Naive thymus-derived CD4-positive, alpha-beta T cell (primary cell): ENCODE measurements at regions of chr5 and their contacts with region 1.

Region 1: DNA sequence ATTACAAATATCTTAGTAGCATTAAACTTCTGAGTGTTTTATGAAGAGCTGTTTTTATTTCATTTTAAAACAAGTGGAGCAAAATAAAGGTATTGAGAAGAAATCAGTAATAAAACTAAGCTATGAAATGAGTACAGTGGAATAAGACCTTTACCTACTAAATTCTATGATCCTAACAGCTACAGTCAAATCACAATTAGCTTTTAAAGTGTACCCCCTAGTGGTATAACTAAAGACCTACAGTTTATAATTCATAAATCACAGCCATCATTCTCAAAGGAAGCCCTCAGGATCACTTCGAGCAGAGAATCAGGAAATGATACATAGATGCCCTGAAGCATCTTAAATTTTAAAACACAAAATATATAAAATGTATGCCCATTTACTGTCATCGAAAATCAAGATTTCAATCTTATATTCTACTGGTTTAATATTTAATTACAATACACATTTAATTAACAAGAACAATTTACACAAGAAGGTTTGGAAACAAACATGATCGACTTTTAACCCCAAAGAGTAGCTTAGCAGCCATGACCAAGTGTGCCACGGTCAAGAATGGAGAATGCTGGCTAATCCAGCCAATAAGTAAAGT is 12.3 kb downstream of the CCNH start:
- DNase-seq: peak in 6 of 9 donors; percentile 30 to 66 (median 52)
- ATAC-seq: peak; percentile 87
- H3K4me3 ChIP-seq: no peak overlapping the region
- H3K4me3 Mint-ChIP-seq: peak overlapping the region in 1 of 10 donors; percentile 34
- H3K27ac ChIP-seq: peak overlapping the region; percentile 43
- H3K27ac Mint-ChIP-seq: peak overlapping the region in 7 of 9 donors; percentile 17 to 75 (median 69)
- H3K4me1 ChIP-seq: peaks cover 11 to 15% of the 10 kb centered on the region in 2 donors
- H3K4me1 Mint-ChIP-seq: peaks cover 13 to 48% (median 28%) of the 10 kb centered on the region in 7 donors
- H3K27me3 ChIP-seq: no peaks in the 10 kb centered on the region
- H3K27me3 Mint-ChIP-seq: no peaks in the 10 kb centered on the region

Region 2: DNA sequence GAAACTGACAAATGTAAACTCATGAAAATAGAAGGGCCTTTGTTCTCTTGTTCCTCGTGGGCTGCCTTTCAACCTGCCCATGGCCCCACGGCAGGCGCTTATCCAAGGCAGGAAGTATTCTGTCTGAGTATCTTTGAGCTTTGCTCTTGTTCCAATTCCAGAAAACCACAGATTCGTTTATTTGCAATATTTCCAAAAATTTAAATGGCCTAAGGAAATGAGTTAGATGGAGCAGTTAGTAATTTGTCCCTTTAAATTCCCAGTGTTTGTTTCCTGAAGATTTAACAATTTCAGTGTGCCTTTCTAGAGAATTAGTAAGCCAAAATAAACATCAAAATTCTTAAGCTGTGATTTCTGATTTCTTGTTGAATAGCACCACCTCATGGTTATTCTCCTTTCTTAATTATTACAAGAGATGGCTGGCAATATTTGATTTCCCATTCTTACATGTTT is 432.1 kb before region 1 on chr5:
- CTCF ChIA-PET with region 1: interaction called, 7 read pairs
- POLR2A ChIA-PET with region 1: no interaction called
- intact Hi-C with region 1: loop called (anchors 1 kb)
- DNase-seq: peak in 5 of 9 donors; percentile 10 to 29 (median 19)
- ATAC-seq: no peak
- H3K4me3 ChIP-seq: no peak overlapping the region
- H3K4me3 Mint-ChIP-seq: no peak overlapping the region
- H3K27ac ChIP-seq: no peak overlapping the region
- H3K27ac Mint-ChIP-seq: peak overlapping the region in 1 of 9 donors; percentile 7
- H3K4me1 ChIP-seq: no peaks in the 10 kb centered on the region
- H3K4me1 Mint-ChIP-seq: peaks cover 0 to 10% (median 6%) of the 10 kb centered on the region in 7 donors
- H3K27me3 ChIP-seq: no peaks in the 10 kb centered on the region
- H3K27me3 Mint-ChIP-seq: peaks cover 0 to 44% (median 11%) of the 10 kb centered on the region in 5 donors

Region 3: GRCh38 chr5:87008751-87009560 is 391.4 kb before region 1 on chr5:
- CTCF ChIA-PET with region 1: no interaction called
- POLR2A ChIA-PET with region 1: no interaction called
- intact Hi-C with region 1: loop called in 1 of 2 experiments (anchors 1 kb)
- DNase-seq: no peak
- ATAC-seq: no peak
- H3K4me3 ChIP-seq: no peak overlapping the region
- H3K4me3 Mint-ChIP-seq: no peak overlapping the region
- H3K27ac ChIP-seq: no peak overlapping the region
- H3K27ac Mint-ChIP-seq: no peak overlapping the region
- H3K4me1 ChIP-seq: no peaks in the 10 kb centered on the region
- H3K4me1 Mint-ChIP-seq: no peaks in the 10 kb centered on the region
- H3K27me3 ChIP-seq: no peaks in the 10 kb centered on the region
- H3K27me3 Mint-ChIP-seq: peaks cover 0 to 20% (median 0%) of the 10 kb centered on the region in 5 donors

Region 4: GRCh38 chr5:87069974-87070624 is 330.3 kb before region 1 on chr5:
- CTCF ChIA-PET with region 1: interaction called, 4 read pairs
- POLR2A ChIA-PET with region 1: interaction called, 3 read pairs
- intact Hi-C with region 1: loop called (anchors 1 kb)
- DNase-seq: no peak
- ATAC-seq: no peak
- H3K4me3 ChIP-seq: no peak overlapping the region
- H3K4me3 Mint-ChIP-seq: no peak overlapping the region
- H3K27ac ChIP-seq: no peak overlapping the region
- H3K27ac Mint-ChIP-seq: peak overlapping the region in 2 of 9 donors; percentile 15 to 38
- H3K4me1 ChIP-seq: peaks cover 7 to 24% of the 10 kb centered on the region in 2 donors
- H3K4me1 Mint-ChIP-seq: peaks cover 10 to 27% (median 20%) of the 10 kb centered on the region in 7 donors
- H3K27me3 ChIP-seq: no peaks in the 10 kb centered on the region
- H3K27me3 Mint-ChIP-seq: no peaks in the 10 kb centered on the region

Region 5: DNA sequence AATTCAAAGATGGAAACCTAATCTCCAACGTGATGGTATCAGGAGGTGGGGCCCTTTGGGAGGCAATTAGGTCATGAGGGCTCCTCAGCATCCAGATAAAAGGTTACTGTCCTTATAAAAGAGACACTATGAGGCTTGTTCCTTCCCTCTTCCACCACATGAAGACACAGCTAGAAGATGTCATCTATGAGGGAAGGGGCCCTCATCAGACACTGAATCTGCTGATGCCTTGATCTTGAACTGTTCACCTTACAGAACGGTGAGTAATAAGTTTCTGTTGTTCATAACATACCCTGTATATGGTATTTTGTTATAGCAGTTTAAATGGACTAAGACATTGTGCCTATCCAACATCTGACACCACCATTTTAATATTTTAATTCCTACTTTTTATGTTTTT is 32.1 kb after region 1 on chr5:
- CTCF ChIA-PET with region 1: no interaction called
- POLR2A ChIA-PET with region 1: no interaction called
- intact Hi-C with region 1: no loop called
- DNase-seq: no peak
- ATAC-seq: no peak
- H3K4me3 ChIP-seq: no peak overlapping the region
- H3K4me3 Mint-ChIP-seq: no peak overlapping the region
- H3K27ac ChIP-seq: no peak overlapping the region
- H3K27ac Mint-ChIP-seq: no peak overlapping the region
- H3K4me1 ChIP-seq: no peaks in the 10 kb centered on the region
- H3K4me1 Mint-ChIP-seq: no peaks in the 10 kb centered on the region
- H3K27me3 ChIP-seq: peaks cover 0 to 2% of the 10 kb centered on the region in 2 donors
- H3K27me3 Mint-ChIP-seq: peaks cover 0 to 25% (median 10%) of the 10 kb centered on the region in 5 donors